CD4-positive, alpha-beta T cell (primary cell): ENCODE measurements at regions of chr15 and their contacts with region 1.

Region 1: GRCh38 chr15:49155110-49155833 is at the start of gene COPS2:
- DNase-seq: peak; percentile 84 to 97 (median 89)
- ATAC-seq: peak; percentile 94
- H3K4me3 ChIP-seq: peak within 1 kb of the TSS; percentile 89
- H3K4me3 Mint-ChIP-seq: peak within 1 kb of the TSS; percentile 98
- H3K27ac ChIP-seq: peak within 1 kb of the TSS; percentile 82 to 89
- H3K27ac Mint-ChIP-seq: peak within 1 kb of the TSS; percentile 95
- H3K4me1 ChIP-seq: peaks cover 14% of the 10 kb centered on the region
- H3K4me1 Mint-ChIP-seq: peaks cover 68% of the 10 kb centered on the region
- H3K27me3 ChIP-seq: no peaks in the 10 kb centered on the region
- H3K27me3 Mint-ChIP-seq: no peaks in the 10 kb centered on the region
- CTCF ChIP-seq: no peak
- total RNA-seq, gene COPS2: 131 to 136 TPM

Region 2: GRCh38 chr15:48810414-48811317 is 344.6 kb before region 1 on chr15 and contains the start of gene CEP152:
- CTCF ChIA-PET with region 1: no interaction called
- POLR2A ChIA-PET with region 1: interaction called, 25 read pairs
- intact Hi-C with region 1: loop called (anchors 2 to 5 kb)
- DNase-seq: peak; percentile 95 to 99 (median 98)
- ATAC-seq: peak; percentile 96
- H3K4me3 ChIP-seq: peak within 1 kb of the TSS; percentile 95
- H3K4me3 Mint-ChIP-seq: peak within 1 kb of the TSS; percentile 85
- H3K27ac ChIP-seq: peak within 1 kb of the TSS in 1 of 2 donors; percentile 43
- H3K27ac Mint-ChIP-seq: peak within 1 kb of the TSS; percentile 74
- H3K4me1 ChIP-seq: peaks cover 17% of the 10 kb centered on the region
- H3K4me1 Mint-ChIP-seq: peaks cover 41% of the 10 kb centered on the region
- H3K27me3 ChIP-seq: no peaks in the 10 kb centered on the region
- H3K27me3 Mint-ChIP-seq: no peaks in the 10 kb centered on the region
- CTCF ChIP-seq: no peak
- total RNA-seq, gene CEP152: 5.2 to 6.3 TPM

Region 3: GRCh38 chr15:49046220-49047102 is 108.8 kb before region 1 on chr15 and contains the start of gene SECISBP2L:
- CTCF ChIA-PET with region 1: interaction called, 4 read pairs
- POLR2A ChIA-PET with region 1: interaction called, 23 read pairs
- intact Hi-C with region 1: loop called in 1 of 2 experiments (anchors 2 kb)
- DNase-seq: peak; percentile 79 to 95 (median 84)
- ATAC-seq: peak; percentile 95
- H3K4me3 ChIP-seq: peak within 1 kb of the TSS; percentile 66
- H3K4me3 Mint-ChIP-seq: peak within 1 kb of the TSS; percentile 98
- H3K27ac ChIP-seq: peak within 1 kb of the TSS; percentile 5 to 52
- H3K27ac Mint-ChIP-seq: peak within 1 kb of the TSS; percentile 92
- H3K4me1 ChIP-seq: peaks cover 11% of the 10 kb centered on the region
- H3K4me1 Mint-ChIP-seq: peaks cover 42% of the 10 kb centered on the region
- H3K27me3 ChIP-seq: no peaks in the 10 kb centered on the region
- H3K27me3 Mint-ChIP-seq: no peaks in the 10 kb centered on the region
- CTCF ChIP-seq: no peak
- total RNA-seq, gene SECISBP2L: 55.9 to 56.0 TPM

Region 4: GRCh38 chr15:49620658-49621368 is 465.5 kb after region 1 on chr15 and contains the starts of genes DTWD1 and FAM227B:
- CTCF ChIA-PET with region 1: no interaction called
- POLR2A ChIA-PET with region 1: interaction called, 18 read pairs
- intact Hi-C with region 1: loop called (anchors 1 kb)
- DNase-seq: peak; percentile 85 to 98 (median 92)
- ATAC-seq: peak; percentile 96
- H3K4me3 ChIP-seq: peak within 1 kb of the TSS; percentile 77
- H3K4me3 Mint-ChIP-seq: peak within 1 kb of the TSS; percentile 99
- H3K27ac ChIP-seq: peak within 1 kb of the TSS; percentile 64 to 75
- H3K27ac Mint-ChIP-seq: peak within 1 kb of the TSS; percentile 97
- H3K4me1 ChIP-seq: peaks cover 9% of the 10 kb centered on the region
- H3K4me1 Mint-ChIP-seq: peaks cover 54% of the 10 kb centered on the region
- H3K27me3 ChIP-seq: no peaks in the 10 kb centered on the region
- H3K27me3 Mint-ChIP-seq: no peaks in the 10 kb centered on the region
- CTCF ChIP-seq: no peak
- total RNA-seq, gene DTWD1: 10.1 to 10.2 TPM
- total RNA-seq, gene FAM227B: 3.0 to 4.4 TPM

Region 5: GRCh38 chr15:50765195-50765973 is 1610.1 kb after region 1 on chr15 and contains the start of gene SPPL2A:
- CTCF ChIA-PET with region 1: no interaction called
- POLR2A ChIA-PET with region 1: no interaction called
- intact Hi-C with region 1: loop called in 1 of 2 experiments (anchors 5 kb)
- DNase-seq: peak; percentile 47 to 88 (median 69)
- ATAC-seq: peak; percentile 89
- H3K4me3 ChIP-seq: peak within 1 kb of the TSS; percentile 72
- H3K4me3 Mint-ChIP-seq: peak within 1 kb of the TSS; percentile 94
- H3K27ac ChIP-seq: peak within 1 kb of the TSS; percentile 82 to 88
- H3K27ac Mint-ChIP-seq: peak within 1 kb of the TSS; percentile 84
- H3K4me1 ChIP-seq: peaks cover 25% of the 10 kb centered on the region
- H3K4me1 Mint-ChIP-seq: peaks cover 44% of the 10 kb centered on the region
- H3K27me3 ChIP-seq: no peaks in the 10 kb centered on the region
- H3K27me3 Mint-ChIP-seq: no peaks in the 10 kb centered on the region
- CTCF ChIP-seq: no peak
- total RNA-seq, gene SPPL2A: 26.6 to 30.7 TPM